Naive thymus-derived CD4-positive, alpha-beta T cell (primary cell): ENCODE measurements at regions of chr20 and their contacts with region 1.

Region 1: GRCh38 chr20:32387252-32387651 is 29.1 kb downstream of the ASXL1 start:
- DNase-seq: peak in 7 of 9 donors; percentile 65 to 86 (median 81)
- ATAC-seq: peak; percentile 96
- H3K4me3 ChIP-seq: no peak overlapping the region
- H3K4me3 Mint-ChIP-seq: peak overlapping the region; percentile 2 to 72 (median 48)
- H3K27ac ChIP-seq: peak overlapping the region; percentile 57
- H3K27ac Mint-ChIP-seq: peak overlapping the region; percentile 6 to 92 (median 63)
- H3K4me1 ChIP-seq: peaks cover 23 to 30% of the 10 kb centered on the region in 2 donors
- H3K4me1 Mint-ChIP-seq: peaks cover 47 to 87% (median 75%) of the 10 kb centered on the region in 7 donors
- H3K27me3 ChIP-seq: no peaks in the 10 kb centered on the region
- H3K27me3 Mint-ChIP-seq: no peaks in the 10 kb centered on the region

Region 2: DNA sequence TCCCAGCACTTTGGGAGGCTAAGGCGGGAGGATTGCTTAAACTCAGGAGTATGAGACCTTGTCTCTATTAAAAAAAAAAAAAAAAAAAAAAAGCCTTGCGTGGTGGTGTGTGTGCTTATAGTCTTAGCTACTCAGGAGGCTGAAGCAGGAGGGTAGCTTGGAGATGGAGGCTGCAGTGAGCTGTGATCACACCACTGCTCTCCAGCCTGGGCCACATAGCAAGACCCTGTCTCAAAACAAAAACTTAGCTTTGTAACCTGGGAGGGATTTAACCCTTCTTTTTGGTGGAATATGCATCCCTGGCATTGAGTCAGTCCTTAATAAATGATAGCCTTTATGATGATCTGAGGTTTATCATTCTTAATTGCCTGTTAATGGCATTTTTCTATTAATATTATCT is 16.4 kb before region 1 on chr20:
- CTCF ChIA-PET with region 1: interaction called, 3 read pairs
- POLR2A ChIA-PET with region 1: interaction called, 4 read pairs
- intact Hi-C with region 1: loop called in 1 of 2 experiments (anchors 2 kb)
- DNase-seq: no peak
- ATAC-seq: no peak
- H3K4me3 ChIP-seq: no peak overlapping the region
- H3K4me3 Mint-ChIP-seq: no peak overlapping the region
- H3K27ac ChIP-seq: no peak overlapping the region
- H3K27ac Mint-ChIP-seq: peak overlapping the region in 3 of 9 donors; percentile 59 to 63 (median 59)
- H3K4me1 ChIP-seq: peaks cover 8 to 9% of the 10 kb centered on the region in 2 donors
- H3K4me1 Mint-ChIP-seq: peaks cover 22 to 35% (median 31%) of the 10 kb centered on the region in 7 donors
- H3K27me3 ChIP-seq: no peaks in the 10 kb centered on the region
- H3K27me3 Mint-ChIP-seq: no peaks in the 10 kb centered on the region

Region 3: DNA sequence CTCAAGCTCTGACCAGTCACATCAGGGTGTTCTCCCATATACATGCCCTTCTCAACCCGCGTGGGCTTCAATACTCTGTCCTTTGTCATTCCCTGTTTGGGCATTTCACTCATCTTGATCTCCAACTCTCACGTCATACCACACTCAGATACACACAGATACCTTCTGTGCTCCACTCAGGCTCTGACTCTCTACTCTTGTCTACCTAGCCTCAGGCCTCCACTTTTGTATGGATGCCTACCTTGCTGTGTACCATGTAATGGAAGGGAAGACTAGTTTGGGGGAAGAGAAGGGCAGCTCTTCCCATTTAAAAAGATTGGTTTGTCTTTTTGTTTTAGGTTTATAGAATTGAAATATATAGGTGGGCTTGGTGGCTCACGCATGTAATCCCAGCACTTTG is 19.4 kb after region 1 on chr20:
- CTCF ChIA-PET with region 1: no interaction called
- POLR2A ChIA-PET with region 1: interaction called, 7 read pairs
- intact Hi-C with region 1: loop called in 1 of 2 experiments (anchors 1 kb)
- DNase-seq: no peak
- ATAC-seq: no peak
- H3K4me3 ChIP-seq: no peak overlapping the region
- H3K4me3 Mint-ChIP-seq: peak overlapping the region; percentile 10 to 85 (median 76)
- H3K27ac ChIP-seq: peak overlapping the region; percentile 61
- H3K27ac Mint-ChIP-seq: peak overlapping the region; percentile 58 to 95 (median 91)
- H3K4me1 ChIP-seq: peaks cover 17 to 48% of the 10 kb centered on the region in 2 donors
- H3K4me1 Mint-ChIP-seq: peaks cover 36 to 87% (median 71%) of the 10 kb centered on the region in 7 donors
- H3K27me3 ChIP-seq: no peaks in the 10 kb centered on the region
- H3K27me3 Mint-ChIP-seq: no peaks in the 10 kb centered on the region

Region 4: GRCh38 chr20:32421290-32421689 is 34.0 kb after region 1 on chr20:
- CTCF ChIA-PET with region 1: no interaction called
- POLR2A ChIA-PET with region 1: no interaction called
- intact Hi-C with region 1: loop called in 1 of 2 experiments (anchors 5 kb)
- DNase-seq: no peak
- ATAC-seq: no peak
- H3K4me3 ChIP-seq: no peak overlapping the region
- H3K4me3 Mint-ChIP-seq: no peak overlapping the region
- H3K27ac ChIP-seq: no peak overlapping the region
- H3K27ac Mint-ChIP-seq: peak overlapping the region in 1 of 9 donors; percentile 71
- H3K4me1 ChIP-seq: no peaks in the 10 kb centered on the region
- H3K4me1 Mint-ChIP-seq: peaks cover 9 to 56% (median 49%) of the 10 kb centered on the region in 7 donors
- H3K27me3 ChIP-seq: no peaks in the 10 kb centered on the region
- H3K27me3 Mint-ChIP-seq: no peaks in the 10 kb centered on the region